Endothelial cell of umbilical vein (primary cell): ENCODE measurements at regions of chr11 and their contacts with region 1.

Region 1: GRCh38 chr11:12043959-12044819 is 35.8 kb upstream of the DKK3 start:
- DNase-seq: peak; percentile 95
- H3K4me3 ChIP-seq: no peak overlapping the region
- H3K27ac ChIP-seq: peak overlapping the region; percentile 84
- H3K4me1 ChIP-seq: peaks cover 41% of the 10 kb centered on the region
- H3K27me3 ChIP-seq: no peaks in the 10 kb centered on the region
- CTCF ChIP-seq: peak; percentile 79 to 92
- POLR2A ChIP-seq: no peak

Region 2: DNA sequence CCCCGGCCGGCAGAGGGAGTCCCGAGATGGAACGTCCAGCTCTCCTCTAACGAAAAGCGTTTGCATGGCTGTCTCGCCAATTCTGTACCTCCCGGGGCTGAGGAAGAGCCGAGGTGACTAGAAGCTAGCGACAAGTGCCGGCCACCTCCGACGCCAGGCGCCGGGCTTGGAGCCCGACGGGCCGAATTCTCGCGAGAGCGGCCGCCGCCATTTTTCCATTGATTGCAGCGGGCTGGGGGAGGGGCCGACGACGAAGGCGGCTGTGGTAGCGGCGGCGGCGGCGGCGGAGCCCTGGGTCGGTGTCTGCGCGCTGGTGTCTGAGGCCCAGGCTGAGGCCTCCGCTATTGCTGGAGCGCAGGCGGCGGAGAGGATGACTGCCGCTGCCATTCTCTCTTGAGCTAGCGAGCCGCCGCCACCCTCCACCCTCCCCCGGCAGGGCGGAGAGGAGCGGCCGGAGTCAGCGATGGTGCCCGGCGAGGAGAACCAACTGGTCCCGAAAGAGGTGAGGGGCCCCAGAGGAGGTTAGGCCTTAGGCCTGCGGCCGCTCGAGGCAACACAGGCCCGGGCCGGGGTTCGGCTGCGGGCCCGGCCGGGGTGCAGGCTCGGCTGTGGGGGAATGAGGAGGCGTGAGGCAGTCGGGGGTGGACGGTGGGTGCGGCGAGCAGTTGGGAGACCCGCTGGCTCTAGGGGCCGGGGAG is 202.3 kb before region 1 on chr11 and contains the start of gene USP47:
- CTCF ChIA-PET with region 1: interaction called, 9 read pairs
- POLR2A ChIA-PET with region 1: no interaction called
- dilution Hi-C with region 1: no loop called
- intact Hi-C with region 1: loop called (anchors 1 kb)
- DNase-seq: peak; percentile 87
- H3K4me3 ChIP-seq: peak within 1 kb of the TSS; percentile 81 to 97 (median 86)
- H3K27ac ChIP-seq: peak within 1 kb of the TSS; percentile 95
- H3K4me1 ChIP-seq: peaks cover 22% of the 10 kb centered on the region
- H3K27me3 ChIP-seq: no peaks in the 10 kb centered on the region
- CTCF ChIP-seq: peak; percentile 44 to 55
- POLR2A ChIP-seq: peak; percentile 97
- total RNA-seq, gene USP47: 38.0 and 41.5 TPM in 2 replicates

Region 3: DNA sequence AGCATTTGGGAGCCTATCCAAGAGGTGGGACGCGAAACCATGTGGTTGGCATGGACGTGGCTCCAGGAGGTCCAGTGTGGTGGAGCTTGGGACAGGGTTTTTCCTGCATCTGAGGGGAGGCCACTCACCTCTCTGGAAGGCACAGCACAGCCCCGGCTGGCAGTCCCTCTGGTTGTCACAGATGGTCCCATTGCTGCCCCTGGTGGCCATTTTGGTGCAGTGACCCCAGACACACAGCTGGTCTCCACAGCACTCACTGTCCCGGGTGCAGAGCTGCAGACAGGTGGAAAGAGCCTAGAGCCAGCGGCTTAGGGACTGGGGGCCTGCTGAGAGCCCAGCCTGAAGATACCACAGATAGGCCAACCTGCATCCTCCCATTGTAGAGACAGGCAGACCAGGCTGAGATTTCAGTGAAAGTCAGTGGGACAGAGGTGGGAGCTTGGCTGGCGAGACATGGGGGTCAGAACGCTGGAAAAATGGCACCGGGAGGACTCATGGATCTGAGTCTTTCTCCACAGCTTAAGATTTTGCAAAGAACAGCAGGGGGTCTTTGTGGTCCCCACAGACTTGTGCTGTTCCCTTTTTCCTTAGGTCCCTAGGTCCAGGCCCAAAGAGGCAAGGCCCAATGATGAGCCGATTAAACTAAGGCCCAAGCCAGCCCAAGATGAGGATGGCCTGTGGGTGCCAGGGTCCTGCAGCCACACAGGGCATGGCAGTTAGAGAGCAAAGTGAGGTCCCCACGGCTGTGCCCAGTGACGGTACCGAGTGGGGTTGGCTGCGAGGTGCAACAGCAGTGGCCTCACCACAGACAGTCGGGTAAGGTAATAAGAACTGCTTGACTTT is 77.1 kb before region 1 on chr11:
- CTCF ChIA-PET with region 1: interaction called, 10 read pairs
- POLR2A ChIA-PET with region 1: no interaction called
- dilution Hi-C with region 1: no loop called
- intact Hi-C with region 1: loop called (anchors 1 kb)
- DNase-seq: peak; percentile 49
- H3K4me3 ChIP-seq: no peak overlapping the region
- H3K27ac ChIP-seq: no peak overlapping the region
- H3K4me1 ChIP-seq: no peaks in the 10 kb centered on the region
- H3K27me3 ChIP-seq: no peaks in the 10 kb centered on the region
- CTCF ChIP-seq: peak; percentile 80 to 86
- POLR2A ChIP-seq: no peak

Region 4: DNA sequence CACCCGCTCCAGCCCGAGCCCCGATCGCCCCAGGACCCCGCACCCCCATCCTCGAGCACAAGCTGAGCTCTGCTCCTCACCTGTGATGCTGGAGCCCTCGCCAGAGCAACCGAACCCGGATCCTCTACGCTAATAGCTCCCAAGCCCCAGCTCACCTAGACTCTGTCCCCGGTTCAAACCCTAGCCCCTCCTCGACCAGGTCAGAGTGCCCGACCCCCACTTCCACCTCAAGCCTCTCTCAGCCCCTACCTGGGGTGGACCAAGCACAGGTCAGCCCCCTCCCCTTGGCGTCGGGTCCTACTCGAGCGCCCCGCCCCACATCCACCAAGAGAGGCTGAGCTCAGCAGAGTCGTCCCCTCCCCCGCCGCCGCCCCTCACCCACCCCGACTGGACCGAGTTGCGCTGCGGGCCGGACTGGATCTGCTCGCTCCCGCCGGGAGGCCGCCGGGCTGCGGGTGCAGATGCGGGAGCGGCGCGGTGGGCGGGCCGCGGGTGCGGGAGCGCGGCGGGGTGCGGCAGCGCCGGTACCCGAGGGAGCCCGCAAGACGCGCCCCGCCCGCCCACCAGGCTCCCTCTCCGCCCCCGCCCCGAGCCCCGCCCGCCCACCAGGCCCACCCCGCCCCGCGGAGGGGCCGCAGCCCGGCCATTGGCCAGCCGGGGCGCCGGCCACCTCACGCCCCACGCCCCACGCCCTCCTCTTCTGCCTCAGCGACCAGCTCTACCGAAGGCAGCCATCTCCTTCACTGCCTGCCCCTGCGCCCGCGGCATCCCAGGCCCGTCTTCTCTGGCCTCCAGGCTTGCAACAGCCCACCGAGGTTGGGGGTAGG is 35.2 kb before region 1 on chr11:
- CTCF ChIA-PET with region 1: interaction called, 28 read pairs
- POLR2A ChIA-PET with region 1: interaction called, 5 read pairs
- dilution Hi-C with region 1: no loop called
- intact Hi-C with region 1: loop called (anchors 1 kb)
- DNase-seq: peak; percentile 69
- H3K4me3 ChIP-seq: peak overlapping the region; percentile 79 to 97 (median 91)
- H3K27ac ChIP-seq: peak overlapping the region; percentile 12
- H3K4me1 ChIP-seq: peaks cover 37% of the 10 kb centered on the region
- H3K27me3 ChIP-seq: peaks cover 0 to 2% of the 10 kb centered on the region in 2 experiments
- CTCF ChIP-seq: no peak
- POLR2A ChIP-seq: peak; percentile 20

Region 5: GRCh38 chr11:12200279-12201010 is 156.3 kb after region 1 on chr11:
- CTCF ChIA-PET with region 1: interaction called, 11 read pairs
- POLR2A ChIA-PET with region 1: no interaction called
- dilution Hi-C with region 1: no loop called
- intact Hi-C with region 1: loop called (anchors 1 kb)
- DNase-seq: peak; percentile 93
- H3K4me3 ChIP-seq: no peak overlapping the region
- H3K27ac ChIP-seq: peak overlapping the region; percentile 94
- H3K4me1 ChIP-seq: peaks cover 45% of the 10 kb centered on the region
- H3K27me3 ChIP-seq: no peaks in the 10 kb centered on the region
- CTCF ChIP-seq: no peak
- POLR2A ChIP-seq: no peak

Region 6: GRCh38 chr11:12893787-12894672 is 849.8 kb after region 1 on chr11:
- CTCF ChIA-PET with region 1: interaction called, 3 read pairs
- POLR2A ChIA-PET with region 1: no interaction called
- dilution Hi-C with region 1: no loop called
- intact Hi-C with region 1: loop called (anchors 10 kb)
- DNase-seq: peak; percentile 69
- H3K4me3 ChIP-seq: no peak overlapping the region
- H3K27ac ChIP-seq: no peak overlapping the region
- H3K4me1 ChIP-seq: no peaks in the 10 kb centered on the region
- H3K27me3 ChIP-seq: no peaks in the 10 kb centered on the region
- CTCF ChIP-seq: peak; percentile 72 to 96
- POLR2A ChIP-seq: no peak